ENCODE measurements at regions of chr6 and their contacts with region 1.

Region 1: DNA sequence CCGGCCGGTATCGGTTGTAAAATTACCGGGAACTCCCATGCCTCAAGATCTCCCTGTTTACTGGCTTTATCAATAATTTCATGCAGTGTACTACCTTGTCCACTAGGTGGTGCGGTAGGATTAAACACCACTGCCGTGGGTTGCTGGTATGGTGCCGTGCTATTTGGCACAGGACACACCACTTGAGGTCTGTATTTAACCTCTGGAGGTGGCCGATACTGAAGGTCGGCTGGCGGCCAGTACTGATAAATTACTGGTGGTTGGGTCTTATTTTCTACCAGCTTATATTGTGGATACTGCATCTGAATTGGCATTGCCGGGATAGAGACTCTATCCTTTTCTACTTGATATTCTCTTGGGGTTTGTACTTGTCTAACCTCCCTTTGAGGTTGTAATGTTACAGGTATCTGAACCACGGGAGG is 14.3 kb upstream of the PTCRA start:
- DNase-seq: peak; percentile 72
- ATAC-seq: peak; percentile 97
- H3K4me3 ChIP-seq: peak overlapping the region in 1 of 2 experiments; percentile 23; a peak in 2 of 4 replicates
- H3K27ac ChIP-seq: 0 out of 2 replicates have a peak overlapping the region, but pooled peaks have one; percentile 29
- H3K4me1 ChIP-seq: peaks cover 5% of the 10 kb centered on the region
- H3K27me3 ChIP-seq: no peaks in the 10 kb centered on the region
- CTCF ChIP-seq: peak; percentile 92

Region 2: GRCh38 chr6:42963855-42964605 is 62.5 kb after region 1 on chr6:
- CTCF ChIA-PET with region 1: no interaction called
- POLR2A ChIA-PET with region 1: no interaction called
- in situ Hi-C with region 1: no loop called
- intact Hi-C with region 1: loop called (anchors 10 kb)
- DNase-seq: no peak
- ATAC-seq: peak; percentile 48
- H3K4me3 ChIP-seq: no peak overlapping the region
- H3K27ac ChIP-seq: no peak overlapping the region
- H3K4me1 ChIP-seq: peaks cover 7% of the 10 kb centered on the region
- H3K27me3 ChIP-seq: no peaks in the 10 kb centered on the region
- CTCF ChIP-seq: no peak; the same call in 1 of the 2 replicates

Region 3: GRCh38 chr6:42984001-42984923 is 82.7 kb after region 1 on chr6 and contains the start of gene PPP2R5D:
- CTCF ChIA-PET with region 1: interaction called, 12 read pairs
- POLR2A ChIA-PET with region 1: no interaction called
- in situ Hi-C with region 1: no loop called
- intact Hi-C with region 1: no loop called
- DNase-seq: peak; percentile 93
- ATAC-seq: peak; percentile 97
- H3K4me3 ChIP-seq: peak within 1 kb of the TSS; percentile 66 to 75
- H3K27ac ChIP-seq: peak within 1 kb of the TSS; percentile 95
- H3K4me1 ChIP-seq: peaks cover 10% of the 10 kb centered on the region; the same call in 1 of the 2 replicates
- H3K27me3 ChIP-seq: no peaks in the 10 kb centered on the region
- CTCF ChIP-seq: no peak
- total RNA-seq, gene PPP2R5D: 63.6 TPM

Region 4: DNA sequence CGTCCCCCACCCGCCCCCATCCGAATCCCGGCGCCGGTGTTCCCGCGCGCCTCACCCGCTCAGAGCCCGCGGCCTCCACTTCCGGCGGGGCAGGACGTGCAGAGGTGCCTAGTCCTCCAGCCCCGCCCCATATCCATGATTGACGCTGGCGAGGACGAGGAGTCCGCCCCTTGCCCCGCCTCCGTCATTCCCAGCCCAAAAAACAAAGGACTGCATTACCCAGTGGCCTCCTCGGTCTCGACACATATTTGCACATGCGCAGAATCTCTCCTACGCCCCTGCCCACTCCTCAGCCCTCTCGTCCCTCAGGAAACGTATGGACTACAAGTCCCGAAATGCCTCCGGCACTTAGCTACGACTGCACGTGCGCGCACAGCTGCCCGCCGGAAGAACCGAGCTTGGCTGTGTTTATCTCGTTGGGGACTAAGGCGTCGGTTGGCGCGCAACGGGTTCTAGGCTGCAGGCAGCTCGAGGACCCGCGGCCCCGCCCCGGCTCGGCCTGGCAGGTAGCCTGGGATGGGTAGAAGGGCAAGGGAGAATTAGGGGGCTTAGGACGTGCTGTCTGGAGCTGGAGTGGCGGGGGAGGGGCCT is 112.4 kb after region 1 on chr6 and contains the starts of genes KLHDC3 and MEA1:
- CTCF ChIA-PET with region 1: interaction called, 3 read pairs
- POLR2A ChIA-PET with region 1: no interaction called
- in situ Hi-C with region 1: no loop called
- intact Hi-C with region 1: loop called (anchors 5 kb)
- DNase-seq: peak; percentile 99
- ATAC-seq: peak; percentile 97
- H3K4me3 ChIP-seq: peak within 1 kb of the TSS; percentile 87 to 95
- H3K27ac ChIP-seq: peak within 1 kb of the TSS; percentile 94
- H3K4me1 ChIP-seq: peaks cover 20% of the 10 kb centered on the region
- H3K27me3 ChIP-seq: no peaks in the 10 kb centered on the region
- CTCF ChIP-seq: no peak
- total RNA-seq, gene KLHDC3: 60.9 TPM
- total RNA-seq, gene MEA1: 111 TPM

Region 5: DNA sequence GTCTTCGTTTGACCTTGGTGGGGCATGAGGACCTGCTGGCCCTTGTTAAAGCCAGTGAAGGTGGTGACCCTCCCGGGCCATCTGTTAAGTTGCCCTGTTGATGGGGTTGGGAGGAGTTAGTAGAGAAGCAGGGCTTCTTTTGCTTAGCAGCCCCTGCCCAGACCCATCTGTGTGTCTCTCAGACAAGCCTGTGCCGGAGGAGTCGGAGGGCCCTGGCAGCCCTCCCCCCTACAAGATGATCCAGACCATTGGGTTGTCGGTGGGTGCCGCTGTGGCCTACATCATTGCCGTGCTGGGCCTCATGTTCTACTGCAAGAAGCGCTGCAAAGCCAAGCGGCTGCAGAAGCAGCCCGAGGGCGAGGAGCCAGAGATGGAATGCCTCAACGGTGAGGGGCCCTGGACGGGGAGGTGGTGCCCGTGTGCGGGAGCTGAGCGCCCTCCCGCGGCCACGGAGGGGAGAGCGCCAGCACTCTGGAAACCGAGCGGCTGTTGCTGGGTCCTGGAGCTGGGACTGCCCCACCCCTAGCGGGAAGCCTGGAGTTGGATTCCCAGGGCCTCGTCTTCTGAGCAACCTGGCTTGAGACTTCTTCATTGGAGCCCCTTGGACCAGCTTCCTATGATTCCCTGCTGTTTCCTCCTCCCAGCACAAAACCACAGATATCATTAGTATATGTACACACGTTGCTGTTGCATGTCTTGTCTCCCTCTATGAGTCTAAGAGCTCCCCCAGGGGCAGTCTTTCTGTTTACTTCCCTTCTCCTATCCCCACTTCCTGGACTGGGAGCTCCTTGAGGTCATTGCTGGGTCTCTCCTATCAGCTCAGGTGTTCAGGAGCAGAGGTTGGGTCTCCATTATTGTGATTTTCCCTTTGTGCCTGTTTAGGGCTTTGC is 241.9 kb after region 1 on chr6:
- CTCF ChIA-PET with region 1: no interaction called
- POLR2A ChIA-PET with region 1: no interaction called
- in situ Hi-C with region 1: no loop called
- intact Hi-C with region 1: loop called (anchors 10 kb)
- DNase-seq: no peak
- ATAC-seq: peak; percentile 97
- H3K4me3 ChIP-seq: no peak overlapping the region
- H3K27ac ChIP-seq: peak overlapping the region; percentile 60
- H3K4me1 ChIP-seq: peaks cover 17% of the 10 kb centered on the region
- H3K27me3 ChIP-seq: no peaks in the 10 kb centered on the region
- CTCF ChIP-seq: peak; percentile 97

Measured in Panc1 (cell line).